Naive thymus-derived CD4-positive, alpha-beta T cell (primary cell): ENCODE measurements at regions of chr5 and their contacts with region 1.

Region 1: GRCh38 chr5:50751064-50751657 is 84.7 kb downstream of the PARP8 start:
- DNase-seq: peak in 7 of 9 donors; percentile 58 to 79 (median 69)
- ATAC-seq: peak; percentile 99
- H3K4me3 ChIP-seq: no peak overlapping the region
- H3K4me3 Mint-ChIP-seq: peak overlapping the region in 9 of 10 donors; percentile 37 to 69 (median 61)
- H3K27ac ChIP-seq: no peak overlapping the region
- H3K27ac Mint-ChIP-seq: peak overlapping the region; percentile 68 to 92 (median 89)
- H3K4me1 ChIP-seq: peaks cover 27 to 32% of the 10 kb centered on the region in 2 donors
- H3K4me1 Mint-ChIP-seq: peaks cover 36 to 75% (median 61%) of the 10 kb centered on the region in 7 donors
- H3K27me3 ChIP-seq: no peaks in the 10 kb centered on the region
- H3K27me3 Mint-ChIP-seq: no peaks in the 10 kb centered on the region

Region 2: GRCh38 chr5:50325237-50325832 is 425.8 kb before region 1 on chr5:
- CTCF ChIA-PET with region 1: no interaction called
- POLR2A ChIA-PET with region 1: no interaction called
- intact Hi-C with region 1: loop called (anchors 1 to 5 kb)
- DNase-seq: peak in 5 of 9 donors; percentile 2 to 33 (median 29)
- ATAC-seq: peak; percentile 42
- H3K4me3 ChIP-seq: no peak overlapping the region
- H3K4me3 Mint-ChIP-seq: no peak overlapping the region
- H3K27ac ChIP-seq: no peak overlapping the region
- H3K27ac Mint-ChIP-seq: no peak overlapping the region
- H3K4me1 ChIP-seq: peaks cover 0 to 9% of the 10 kb centered on the region in 2 donors
- H3K4me1 Mint-ChIP-seq: peaks cover 7 to 24% (median 16%) of the 10 kb centered on the region in 7 donors
- H3K27me3 ChIP-seq: no peaks in the 10 kb centered on the region
- H3K27me3 Mint-ChIP-seq: peaks cover 0 to 5% (median 0%) of the 10 kb centered on the region in 5 donors

Region 3: DNA sequence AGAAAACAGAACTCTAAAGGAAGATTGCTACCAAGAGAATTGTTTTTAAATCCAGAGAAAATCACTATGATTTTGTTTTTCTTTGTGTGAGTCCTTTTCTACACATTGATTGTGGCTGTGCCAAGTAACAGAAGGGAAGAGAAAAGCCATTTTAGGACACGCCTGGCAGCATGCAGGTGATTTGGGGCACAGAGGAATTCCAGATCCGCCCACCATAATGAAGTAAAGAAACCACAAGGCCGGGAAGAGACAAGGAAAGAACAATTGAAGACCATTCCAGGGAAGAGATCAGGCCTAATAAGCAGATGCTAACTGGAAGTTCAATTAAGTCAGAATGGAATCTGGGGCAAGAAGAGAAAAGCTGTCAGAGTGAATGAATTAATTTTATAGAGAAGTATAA is 521.8 kb after region 1 on chr5:
- CTCF ChIA-PET with region 1: no interaction called
- POLR2A ChIA-PET with region 1: no interaction called
- intact Hi-C with region 1: no loop called
- DNase-seq: no peak
- ATAC-seq: no peak
- H3K4me3 ChIP-seq: no peak overlapping the region
- H3K4me3 Mint-ChIP-seq: no peak overlapping the region
- H3K27ac ChIP-seq: no peak overlapping the region
- H3K27ac Mint-ChIP-seq: no peak overlapping the region
- H3K4me1 ChIP-seq: no peaks in the 10 kb centered on the region
- H3K4me1 Mint-ChIP-seq: no peaks in the 10 kb centered on the region
- H3K27me3 ChIP-seq: no peaks in the 10 kb centered on the region
- H3K27me3 Mint-ChIP-seq: no peaks in the 10 kb centered on the region